ENCODE measurements at regions of chr18 and their contacts with region 1.

Region 1: GRCh38 chr18:4847056-4847455 is 350.0 kb downstream of the AKAIN1 start:
- DNase-seq: no peak
- H3K4me3 ChIP-seq: no peak overlapping the region
- H3K27ac ChIP-seq: no peak overlapping the region
- H3K4me1 ChIP-seq: no peaks in the 10 kb centered on the region
- H3K27me3 ChIP-seq: peaks cover 53% of the 10 kb centered on the region
- CTCF ChIP-seq: no peak

Region 2: DNA sequence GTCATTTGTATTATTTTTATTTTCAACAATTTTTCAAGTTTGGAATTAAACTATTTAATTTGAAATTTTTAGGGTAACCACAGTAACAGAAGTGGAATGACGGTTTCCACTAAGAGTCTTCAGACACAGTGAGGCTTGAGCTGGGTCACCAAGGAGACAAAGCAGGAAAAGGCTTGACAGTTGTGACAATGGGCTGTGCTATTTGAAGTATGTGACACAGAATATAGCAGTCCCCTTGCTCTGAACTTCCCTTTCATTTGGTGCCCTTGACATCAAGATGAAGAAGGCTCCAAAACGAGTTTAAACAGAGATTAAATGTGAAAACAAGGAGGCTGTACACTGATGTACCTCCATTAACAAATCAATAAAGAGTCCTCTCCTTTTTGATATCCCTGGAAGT is 126.5 kb before region 1 on chr18:
- CTCF ChIA-PET with region 1: no interaction called
- POLR2A ChIA-PET with region 1: no interaction called
- intact Hi-C with region 1: loop called (anchors 10 kb)
- DNase-seq: no peak
- H3K4me3 ChIP-seq: no peak overlapping the region
- H3K27ac ChIP-seq: no peak overlapping the region
- H3K4me1 ChIP-seq: no peaks in the 10 kb centered on the region
- H3K27me3 ChIP-seq: peaks cover 40% of the 10 kb centered on the region
- CTCF ChIP-seq: no peak